Motor neuron (in vitro differentiated cells): ENCODE measurements at regions of chr2 and their contacts with region 1.

Region 1: DNA sequence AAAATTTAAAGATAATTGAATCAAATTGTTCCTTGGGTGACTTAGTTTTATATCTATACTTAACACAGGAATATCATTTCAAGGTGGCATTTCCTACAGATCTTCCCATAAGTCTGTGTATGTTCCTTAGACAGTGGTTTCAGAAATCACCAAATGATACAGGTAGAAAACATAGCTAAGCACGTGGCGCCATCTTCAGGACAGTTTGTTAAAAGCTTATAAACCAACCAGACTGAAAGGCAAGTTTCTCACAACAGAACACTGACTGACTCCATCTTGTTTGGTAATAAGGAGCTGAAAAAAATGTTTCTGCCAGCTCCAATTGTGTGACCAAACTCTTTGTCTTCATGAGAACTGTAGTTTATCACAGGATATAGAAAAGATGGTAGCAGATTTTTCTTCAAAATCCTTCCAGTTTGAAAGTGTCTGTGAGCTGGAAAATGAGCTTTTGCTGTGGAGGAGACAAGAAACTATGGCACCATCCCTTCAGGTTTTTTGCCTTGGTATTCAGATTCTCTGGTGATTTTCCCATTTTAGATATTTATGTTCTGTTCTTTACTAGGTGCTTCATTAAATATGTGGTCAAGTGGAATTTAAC is 34.8 kb upstream of the NEUROD1 start:
- ATAC-seq: peak; percentile 69 to 88 (median 81)
- H3K4me3 ChIP-seq: no peak overlapping the region
- H3K27ac ChIP-seq: no peak overlapping the region
- H3K4me1 ChIP-seq: no peaks in the 10 kb centered on the region

Region 2: GRCh38 chr2:181077128-181077709 is 637.9 kb before region 1 on chr2:
- in situ Hi-C with region 1: loop called in 3 of 9 experiments (anchors 25 kb)
- ATAC-seq: peak in 7 of 8 experiments; percentile 46 to 87 (median 65)
- H3K4me3 ChIP-seq: no peak overlapping the region
- H3K27ac ChIP-seq: no peak overlapping the region
- H3K4me1 ChIP-seq: no peaks in the 10 kb centered on the region

Region 3: DNA sequence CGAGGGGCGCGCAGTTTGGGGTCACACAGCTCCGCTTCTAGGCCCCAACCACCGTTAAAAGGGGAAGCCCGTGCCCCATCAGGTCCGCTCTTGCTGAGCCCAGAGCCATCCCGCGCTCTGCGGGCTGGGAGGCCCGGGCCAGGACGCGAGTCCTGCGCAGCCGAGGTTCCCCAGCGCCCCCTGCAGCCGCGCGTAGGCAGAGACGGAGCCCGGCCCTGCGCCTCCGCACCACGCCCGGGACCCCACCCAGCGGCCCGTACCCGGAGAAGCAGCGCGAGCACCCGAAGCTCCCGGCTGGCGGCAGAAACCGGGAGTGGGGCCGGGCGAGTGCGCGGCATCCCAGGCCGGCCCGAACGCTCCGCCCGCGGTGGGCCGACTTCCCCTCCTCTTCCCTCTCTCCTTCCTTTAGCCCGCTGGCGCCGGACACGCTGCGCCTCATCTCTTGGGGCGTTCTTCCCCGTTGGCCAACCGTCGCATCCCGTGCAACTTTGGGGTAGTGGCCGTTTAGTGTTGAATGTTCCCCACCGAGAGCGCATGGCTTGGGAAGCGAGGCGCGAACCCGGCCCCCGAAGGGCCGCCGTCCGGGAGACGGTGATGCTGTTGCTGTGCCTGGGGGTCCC is 257.9 kb before region 1 on chr2 and contains the start of gene ITGA4:
- in situ Hi-C with region 1: loop called in 1 of 9 experiments (anchors 25 kb)
- ATAC-seq: peak; percentile 89 to 98 (median 97)
- H3K4me3 ChIP-seq: peak within 1 kb of the TSS; percentile 46 to 72 (median 56)
- H3K27ac ChIP-seq: no peak within 1 kb of the TSS
- H3K4me1 ChIP-seq: no peaks in the 10 kb centered on the region
- total RNA-seq, gene ITGA4: 1.4 to 58.3 (median 8.4) TPM

Region 4: GRCh38 chr2:181573140-181573736 is 141.9 kb before region 1 on chr2:
- in situ Hi-C with region 1: loop called in 4 of 9 experiments (anchors 10 to 25 kb)
- ATAC-seq: peak in 2 of 8 experiments; percentile 31 to 41
- H3K4me3 ChIP-seq: no peak overlapping the region
- H3K27ac ChIP-seq: no peak overlapping the region
- H3K4me1 ChIP-seq: peaks cover 0 to 13% of the 10 kb centered on the region in 2 donors

Region 5: GRCh38 chr2:181814064-181814491 is 98.9 kb after region 1 on chr2:
- in situ Hi-C with region 1: no loop called
- ATAC-seq: no peak
- H3K4me3 ChIP-seq: no peak overlapping the region
- H3K27ac ChIP-seq: no peak overlapping the region
- H3K4me1 ChIP-seq: peaks cover 3 to 5% of the 10 kb centered on the region in 2 donors

Region 6: GRCh38 chr2:182426082-182426917 is 711.2 kb after region 1 on chr2:
- in situ Hi-C with region 1: no loop called
- ATAC-seq: peak in 2 of 8 experiments; percentile 25 to 32
- H3K4me3 ChIP-seq: no peak overlapping the region
- H3K27ac ChIP-seq: no peak overlapping the region
- H3K4me1 ChIP-seq: no peaks in the 10 kb centered on the region

Region 7: DNA sequence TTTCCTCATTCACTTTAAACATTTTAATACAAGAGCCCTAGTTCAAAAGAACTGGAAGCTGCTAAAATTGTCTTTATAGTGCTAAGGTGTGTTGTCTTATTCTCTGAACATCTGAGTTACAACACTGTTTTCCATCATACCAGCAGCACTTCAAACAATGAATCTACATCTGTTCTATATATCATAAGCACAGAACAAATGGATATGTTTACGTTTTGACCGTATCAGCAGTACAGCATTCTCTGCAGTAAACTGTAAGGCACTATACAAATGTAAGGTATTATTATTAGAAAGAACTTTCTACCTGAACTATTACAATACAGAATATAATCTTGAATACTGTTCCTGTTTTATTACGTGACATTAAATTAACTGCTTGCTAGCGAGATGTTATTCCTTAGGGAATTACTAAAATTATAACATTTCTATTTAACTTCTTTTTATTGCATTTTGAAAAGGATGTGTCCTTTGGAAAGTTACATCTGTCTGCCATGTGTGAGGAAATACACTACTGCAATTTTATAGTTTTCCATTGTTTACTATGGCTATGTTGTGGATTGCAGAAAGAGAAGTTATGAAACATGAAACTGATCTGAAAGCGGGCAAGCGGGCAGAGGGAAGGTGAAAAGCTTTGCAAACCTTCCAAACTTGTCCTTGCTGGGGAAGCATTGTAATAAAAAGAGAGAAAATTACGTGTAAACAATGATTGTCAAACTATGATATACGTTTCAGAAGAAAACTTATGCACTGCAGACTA is 1309.4 kb after region 1 on chr2:
- in situ Hi-C with region 1: no loop called
- ATAC-seq: peak in 2 of 8 experiments; percentile 34 to 87
- H3K4me3 ChIP-seq: no peak overlapping the region
- H3K27ac ChIP-seq: no peak overlapping the region
- H3K4me1 ChIP-seq: no peaks in the 10 kb centered on the region